Activated CD4-positive, alpha-beta memory T cell treated with anti-CD3 and anti-CD28 coated beads, Interleukin-2, amount 10 ng/mL, durations not matched to agents 7 days and 5 days (primary cell): ENCODE measurements at regions of chr12 and their contacts with region 1.

Region 1: GRCh38 chr12:53205747-53206419 is 1.2 kb downstream of the ITGB7 start:
- DNase-seq: peak; percentile 90
- H3K4me3 Mint-ChIP-seq: peak overlapping the region; percentile 78
- H3K27ac Mint-ChIP-seq: peak overlapping the region; percentile 84
- H3K4me1 Mint-ChIP-seq: peaks cover 82% of the 10 kb centered on the region
- H3K27me3 Mint-ChIP-seq: no peaks in the 10 kb centered on the region

Region 2: DNA sequence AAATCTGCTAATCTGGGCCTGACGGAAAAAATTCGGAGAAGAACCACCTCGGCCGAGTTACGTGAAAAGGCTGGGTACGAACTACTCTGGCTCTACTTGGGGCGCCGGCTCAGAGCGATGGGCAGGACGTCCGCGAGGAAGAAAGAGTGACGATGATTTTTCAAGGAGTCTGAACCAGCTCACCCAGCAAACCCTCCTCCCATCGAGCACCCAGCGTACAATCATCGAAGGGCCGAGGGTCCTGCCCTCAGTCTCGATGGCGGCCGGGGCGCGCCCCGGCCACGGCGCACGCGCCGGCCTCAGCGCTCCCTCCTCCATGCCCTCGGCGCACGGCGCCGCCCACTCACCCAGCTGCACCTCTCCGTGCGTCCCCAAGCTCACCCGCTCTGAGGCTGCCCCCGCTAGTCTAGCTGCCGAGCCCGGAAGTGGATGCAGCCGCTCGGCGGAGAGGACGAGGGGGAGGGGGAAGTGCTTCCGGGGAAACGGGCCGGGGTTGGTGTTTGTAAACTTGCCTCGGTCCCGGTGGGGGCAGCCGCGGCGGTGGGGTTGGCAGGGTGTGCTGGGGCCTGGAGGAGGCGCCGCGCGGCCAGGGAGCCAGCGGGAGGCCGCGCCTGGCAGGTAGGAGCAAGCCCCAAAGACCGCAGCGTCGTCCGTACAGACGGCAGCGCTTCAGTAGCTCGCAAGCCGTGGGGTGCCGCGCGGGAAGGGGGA is 25.5 kb before region 1 on chr12 and contains the starts of genes CSAD and ZNF740:
- CTCF ChIA-PET with region 1: interaction called, 20 read pairs
- POLR2A ChIA-PET with region 1: interaction called, 263 read pairs
- DNase-seq: peak; percentile 98
- H3K4me3 Mint-ChIP-seq: peak within 1 kb of the TSS; percentile 84
- H3K27ac Mint-ChIP-seq: peak within 1 kb of the TSS; percentile 93
- H3K4me1 Mint-ChIP-seq: peaks cover 58% of the 10 kb centered on the region
- H3K27me3 Mint-ChIP-seq: no peaks in the 10 kb centered on the region
- total RNA-seq, gene CSAD: 28.6 to 31.0 TPM
- total RNA-seq, gene ZNF740: 33.7 to 45.5 TPM

Region 3: DNA sequence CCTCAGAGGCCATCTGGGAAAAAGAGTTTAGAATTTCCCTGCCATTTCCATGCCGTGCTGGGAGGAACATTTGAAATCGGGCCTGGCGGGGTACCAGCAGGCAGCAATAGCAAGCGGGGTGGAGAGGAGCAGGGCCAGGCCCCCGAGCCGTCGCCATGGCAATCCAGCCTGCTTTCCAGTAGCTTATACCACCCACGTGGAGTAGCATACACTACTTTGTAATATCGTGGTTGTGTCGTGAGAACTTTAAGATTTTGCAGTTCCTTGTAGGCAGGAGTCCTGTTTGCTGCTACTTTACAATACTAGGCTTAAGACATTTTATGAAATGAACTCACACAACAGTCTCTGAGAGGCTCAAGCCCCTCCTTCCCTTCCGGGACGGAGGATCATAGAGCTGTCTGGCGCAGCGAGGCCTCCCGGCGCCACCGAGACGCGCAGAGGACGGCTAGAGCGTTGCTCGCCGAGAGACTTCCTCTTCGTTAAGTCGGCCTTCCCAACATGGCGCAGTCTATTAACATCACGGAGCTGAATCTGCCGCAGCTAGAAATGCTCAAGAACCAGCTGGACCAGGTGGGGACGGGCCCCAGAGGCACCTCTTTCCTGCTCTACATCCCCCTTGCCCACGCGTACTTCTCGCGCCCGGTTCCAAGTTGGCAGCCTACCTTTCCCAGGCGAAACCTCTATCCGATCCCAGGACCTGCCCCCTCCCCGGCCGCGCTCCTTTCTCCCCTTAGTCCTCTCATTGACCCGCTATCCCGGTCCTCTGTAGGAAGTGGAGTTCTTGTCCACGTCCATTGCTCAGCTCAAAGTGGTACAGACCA is 89.4 kb after region 1 on chr12 and contains the start of gene PFDN5:
- CTCF ChIA-PET with region 1: interaction called, 105 read pairs
- POLR2A ChIA-PET with region 1: interaction called, 13 read pairs
- DNase-seq: peak; percentile 90
- H3K4me3 Mint-ChIP-seq: peak within 1 kb of the TSS; percentile 97
- H3K27ac Mint-ChIP-seq: peak within 1 kb of the TSS; percentile 88
- H3K4me1 Mint-ChIP-seq: peaks cover 53% of the 10 kb centered on the region
- H3K27me3 Mint-ChIP-seq: no peaks in the 10 kb centered on the region
- total RNA-seq, gene PFDN5: 300 to 301 TPM